AG04449 (cell line): ENCODE measurements at regions of chr11 and their contacts with region 1.

Region 1: DNA sequence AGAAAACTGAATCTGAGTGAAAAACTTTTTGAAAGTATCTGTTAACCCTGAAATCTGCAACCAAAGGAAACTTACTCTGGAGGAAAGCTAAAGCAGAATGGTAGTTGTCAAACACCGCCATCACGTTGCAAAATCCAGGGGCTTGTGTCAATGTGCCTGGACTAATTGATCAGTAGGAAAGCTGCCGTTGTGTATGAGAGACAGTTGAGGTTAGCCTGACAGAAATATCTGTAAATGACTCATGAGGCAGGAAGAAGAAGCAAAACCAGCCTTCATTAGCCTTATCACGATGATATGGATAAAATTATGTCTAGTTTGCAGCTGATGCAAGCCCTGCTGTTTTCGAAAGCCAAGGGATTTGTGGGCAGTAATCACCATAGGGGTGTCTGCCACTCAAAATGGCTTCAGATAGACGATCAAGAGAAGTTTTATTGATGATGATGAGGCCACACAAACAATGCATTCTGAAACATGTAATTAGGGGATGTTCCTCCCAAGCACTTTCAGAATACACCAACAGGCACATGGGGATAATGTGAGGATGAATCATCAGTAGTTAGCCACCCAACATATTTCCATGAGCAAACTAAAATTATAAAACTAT is 8.9 kb downstream of the SCGB1A1 start:
- DNase-seq: peak; percentile 23
- H3K4me3 ChIP-seq: no peak overlapping the region
- CTCF ChIP-seq: no peak

Region 2: DNA sequence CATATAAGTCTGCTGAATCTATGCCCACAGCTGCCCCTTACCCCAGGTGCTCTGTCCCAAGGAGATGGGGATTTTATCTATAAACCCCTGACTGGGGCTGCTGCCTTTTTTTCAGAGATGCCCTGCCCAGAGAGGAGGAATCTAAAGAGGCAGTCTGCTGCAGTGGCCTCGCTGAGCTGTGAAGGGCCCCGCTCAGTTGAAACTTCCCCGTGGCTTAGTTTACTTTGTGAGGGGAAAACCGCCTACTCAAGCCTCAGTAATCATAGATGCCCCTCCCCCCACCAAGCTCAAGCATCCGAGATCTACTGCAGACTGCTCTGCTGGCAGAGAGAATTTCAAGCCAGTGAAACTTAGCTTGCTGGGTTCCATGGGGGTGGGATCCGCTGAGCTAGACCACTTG is 121.5 kb before region 1 on chr11:
- CTCF ChIA-PET with region 1: no interaction called
- POLR2A ChIA-PET with region 1: no interaction called
- DNase-seq: no peak
- H3K4me3 ChIP-seq: no peak overlapping the region
- CTCF ChIP-seq: no peak

Region 3: DNA sequence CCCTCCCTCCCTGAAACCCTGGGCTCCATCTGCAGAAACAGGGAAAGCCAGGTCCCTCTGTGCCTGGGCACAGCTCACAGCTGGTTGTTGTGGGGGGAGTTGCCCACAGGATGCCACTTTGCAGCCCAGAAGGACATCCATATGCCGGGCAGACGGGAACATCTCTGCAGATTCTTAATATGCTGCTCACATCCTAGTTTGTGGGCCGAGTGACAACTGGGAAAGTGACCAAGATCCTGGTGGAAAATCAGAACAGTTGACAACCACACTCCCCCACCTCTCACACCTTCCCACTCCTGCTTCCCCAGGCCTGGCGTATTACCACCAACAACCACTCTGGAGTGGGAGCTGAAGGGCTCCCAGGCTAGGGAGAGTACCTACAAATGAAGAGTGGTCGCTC is 16.2 kb before region 1 on chr11:
- CTCF ChIA-PET with region 1: interaction called, 29 read pairs
- POLR2A ChIA-PET with region 1: no interaction called
- DNase-seq: no peak
- H3K4me3 ChIP-seq: no peak overlapping the region
- CTCF ChIP-seq: no peak

Region 4: GRCh38 chr11:62497132-62497915 is 69.6 kb after region 1 on chr11:
- CTCF ChIA-PET with region 1: interaction called, 16 read pairs
- POLR2A ChIA-PET with region 1: no interaction called
- DNase-seq: no peak
- H3K4me3 ChIP-seq: no peak overlapping the region
- CTCF ChIP-seq: peak; percentile 23

Region 5: DNA sequence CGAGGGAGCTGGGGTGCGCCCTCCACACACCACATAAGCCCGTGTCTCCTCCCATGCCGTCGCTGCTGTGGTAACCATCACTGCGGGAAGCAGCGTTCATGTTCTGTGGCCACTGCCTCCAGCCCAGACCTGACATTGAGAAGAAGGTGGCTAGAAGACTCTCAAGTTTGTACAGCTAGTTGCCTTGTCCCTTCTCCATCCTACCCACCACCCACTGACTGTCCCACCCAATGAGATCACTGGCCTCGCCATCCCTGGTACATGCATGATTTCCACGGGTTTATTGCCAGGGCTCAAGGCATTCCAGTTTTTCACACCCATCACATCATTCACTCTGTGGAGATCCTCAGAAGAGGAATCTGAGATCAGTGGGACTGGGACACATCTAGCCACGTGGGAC is 85.9 kb after region 1 on chr11:
- CTCF ChIA-PET with region 1: interaction called, 30 read pairs
- POLR2A ChIA-PET with region 1: interaction called, 3 read pairs
- DNase-seq: no peak
- H3K4me3 ChIP-seq: no peak overlapping the region
- CTCF ChIP-seq: no peak

Region 6: GRCh38 chr11:62556108-62556871 is 128.6 kb after region 1 on chr11:
- CTCF ChIA-PET with region 1: interaction called, 337 read pairs
- POLR2A ChIA-PET with region 1: interaction called, 8 read pairs
- DNase-seq: peak; percentile 70
- H3K4me3 ChIP-seq: peak overlapping the region; percentile 39
- CTCF ChIP-seq: no peak

Region 7: DNA sequence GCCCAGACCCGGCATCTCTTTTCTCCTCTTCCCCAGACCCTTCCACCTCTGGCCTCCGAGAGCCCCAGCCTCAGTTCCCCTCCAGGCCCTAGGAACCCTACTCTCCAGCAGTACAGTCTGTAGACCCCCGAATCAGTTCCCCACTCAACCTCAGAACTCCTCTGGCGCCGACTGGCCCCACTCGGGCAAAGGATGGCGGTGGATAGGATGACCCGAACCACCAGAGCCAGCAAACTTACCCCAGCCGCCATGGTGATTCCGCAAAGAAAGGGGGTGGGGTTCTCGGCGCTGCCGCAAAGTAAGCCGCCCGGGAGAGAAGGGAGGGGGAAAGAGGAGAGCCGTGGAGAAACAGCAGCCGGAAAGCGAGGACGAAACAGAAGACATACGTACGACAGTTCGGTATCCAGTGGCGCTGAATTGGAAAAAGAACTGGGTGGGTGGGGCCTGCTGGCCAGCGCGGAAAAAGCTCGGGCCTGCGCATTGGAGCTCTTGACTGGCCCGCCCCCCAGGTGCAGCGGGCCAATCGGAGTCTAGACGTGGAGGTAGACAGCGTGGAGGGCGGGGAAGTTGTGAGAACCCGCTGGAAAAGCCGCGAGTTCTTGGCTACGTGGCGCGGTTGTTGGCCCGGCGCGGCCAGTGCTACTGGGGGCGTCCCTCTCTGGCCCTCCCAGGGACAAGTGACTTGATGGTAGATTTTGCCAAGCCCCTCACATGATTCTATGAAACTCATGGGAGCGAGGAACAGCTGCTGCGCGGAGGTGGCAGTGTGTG is 146.0 kb after region 1 on chr11 and contains the start of gene EEF1G:
- CTCF ChIA-PET with region 1: interaction called, 23 read pairs
- POLR2A ChIA-PET with region 1: interaction called, 5 read pairs
- DNase-seq: peak; percentile 99
- H3K4me3 ChIP-seq: peak within 1 kb of the TSS; percentile 97
- CTCF ChIP-seq: no peak